ENCODE measurements at regions of chr12 and their contacts with region 1.

Region 1: DNA sequence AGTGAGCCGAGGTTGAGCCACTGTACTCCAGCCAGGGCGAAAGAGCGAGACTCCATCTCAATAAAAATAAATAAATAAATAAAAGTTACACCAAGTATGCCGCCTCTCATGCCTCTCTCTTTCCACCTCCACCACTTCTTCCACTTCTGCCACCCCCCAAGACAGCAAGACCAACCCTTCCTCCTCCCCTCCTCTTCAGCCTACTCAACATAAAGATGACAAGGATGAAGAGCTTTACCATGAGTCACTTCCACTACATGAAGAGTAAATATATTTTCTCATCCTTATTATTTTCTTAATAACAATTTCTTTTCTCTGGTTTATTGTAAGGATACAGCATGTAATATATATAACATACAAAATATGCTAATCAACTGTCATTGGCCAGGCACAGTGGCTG is 3.6 kb upstream of the TMED2 start:
- DNase-seq: no peak
- ATAC-seq: no peak
- H3K4me3 ChIP-seq: no peak overlapping the region
- H3K27ac ChIP-seq: peak overlapping the region in 2 of 4 donors; percentile 28 to 95
- H3K4me1 ChIP-seq: peaks cover 23 to 28% of the 10 kb centered on the region in 2 donors
- H3K27me3 ChIP-seq: no peaks in the 10 kb centered on the region
- CTCF ChIP-seq: no peak
- POLR2A ChIP-seq: no peak

Region 2: GRCh38 chr12:123388177-123388947 is 192.4 kb before region 1 on chr12:
- in situ Hi-C with region 1: no loop called
- intact Hi-C with region 1: loop called (anchors 2 kb)
- DNase-seq: peak; percentile 63 to 77
- ATAC-seq: peak; percentile 57 to 61
- H3K4me3 ChIP-seq: peak overlapping the region; percentile 63 to 74 (median 66)
- H3K27ac ChIP-seq: peak overlapping the region; percentile 86 to 96 (median 94)
- H3K4me1 ChIP-seq: peaks cover 46 to 51% of the 10 kb centered on the region in 2 donors
- H3K27me3 ChIP-seq: no peaks in the 10 kb centered on the region
- CTCF ChIP-seq: no peak
- POLR2A ChIP-seq: peak in 1 of 2 donors; percentile 8

Region 3: GRCh38 chr12:123436017-123436964 is 144.5 kb before region 1 on chr12 and contains the start of gene RILPL2:
- in situ Hi-C with region 1: no loop called
- intact Hi-C with region 1: loop called (anchors 2 kb)
- DNase-seq: peak; percentile 68 to 77
- ATAC-seq: peak; percentile 92 to 96
- H3K4me3 ChIP-seq: peak within 1 kb of the TSS; percentile 79 to 96 (median 94)
- H3K27ac ChIP-seq: peak within 1 kb of the TSS; percentile 66 to 75 (median 69)
- H3K4me1 ChIP-seq: peaks cover 10 to 14% of the 10 kb centered on the region in 2 donors
- H3K27me3 ChIP-seq: no peaks in the 10 kb centered on the region
- CTCF ChIP-seq: peak in 2 of 5 experiments; percentile 6 to 32
- POLR2A ChIP-seq: peak; percentile 43 to 44
- total RNA-seq, gene RILPL2: 1.2 to 2.0 (median 1.7) TPM

Region 4: GRCh38 chr12:123457980-123458783 is 122.6 kb before region 1 on chr12 and contains the start of gene SNRNP35:
- in situ Hi-C with region 1: loop called in 1 of 4 experiments (anchors 5 kb)
- intact Hi-C with region 1: loop called (anchors 1 kb)
- DNase-seq: peak; percentile 48 to 71
- ATAC-seq: peak; percentile 86
- H3K4me3 ChIP-seq: peak within 1 kb of the TSS; percentile 63 to 98 (median 89)
- H3K27ac ChIP-seq: peak within 1 kb of the TSS; percentile 86 to 99 (median 98)
- H3K4me1 ChIP-seq: peaks cover 8 to 12% of the 10 kb centered on the region in 2 donors
- H3K27me3 ChIP-seq: no peaks in the 10 kb centered on the region
- CTCF ChIP-seq: no peak
- POLR2A ChIP-seq: peak; percentile 51 to 55
- total RNA-seq, gene SNRNP35: 22.6 to 40.4 (median 23.5) TPM

Region 5: DNA sequence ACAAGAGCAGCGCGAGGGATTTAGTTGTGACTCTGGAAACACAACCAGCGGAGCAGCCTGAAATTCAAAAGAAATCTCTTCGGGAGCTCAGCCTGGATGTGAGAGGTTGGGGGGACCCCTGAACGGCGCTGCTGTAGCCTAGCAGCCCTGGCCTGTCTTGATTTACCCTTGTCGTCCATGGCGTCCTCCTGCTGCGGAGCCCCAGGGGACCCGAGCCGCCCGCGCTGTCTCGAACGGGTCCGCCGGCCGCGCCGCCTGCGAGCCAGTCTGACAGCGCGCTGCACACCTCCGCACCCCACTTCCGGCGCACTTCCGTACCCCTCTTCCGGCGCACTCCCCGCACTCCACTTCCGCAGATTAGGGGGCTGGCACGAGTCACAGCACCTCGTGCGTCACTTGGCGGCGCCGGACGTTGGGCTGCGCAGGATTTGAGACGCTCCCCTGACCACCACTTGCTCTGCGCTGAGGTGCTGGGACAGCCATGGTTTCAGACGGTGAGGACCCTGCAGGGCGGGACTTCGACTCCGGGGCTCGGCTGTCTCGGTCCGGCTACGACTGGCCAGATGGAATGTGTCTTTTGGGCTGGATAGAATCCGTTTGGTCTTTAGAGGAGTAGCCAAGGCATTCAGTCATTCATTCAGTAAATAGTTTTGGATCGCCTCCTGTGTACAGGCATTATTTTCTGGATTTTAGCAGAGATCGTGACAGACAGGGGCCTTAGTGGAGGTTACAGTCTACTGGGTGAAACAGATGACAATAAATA is 52.8 kb after region 1 on chr12 and contains the starts of genes EIF2B1 and GTF2H3:
- in situ Hi-C with region 1: no loop called
- intact Hi-C with region 1: loop called (anchors 1 kb)
- DNase-seq: peak; percentile 92 to 96
- ATAC-seq: peak; percentile 99
- H3K4me3 ChIP-seq: peak within 1 kb of the TSS; percentile 86 to 97 (median 95)
- H3K27ac ChIP-seq: peak within 1 kb of the TSS; percentile 74 to 89 (median 84)
- H3K4me1 ChIP-seq: peaks cover 12% of the 10 kb centered on the region in 2 donors
- H3K27me3 ChIP-seq: no peaks in the 10 kb centered on the region
- CTCF ChIP-seq: peak in 2 of 5 experiments; percentile 14 to 20
- POLR2A ChIP-seq: peak; percentile 63 to 85
- total RNA-seq, gene EIF2B1: 84.5 to 118 (median 112) TPM
- total RNA-seq, gene GTF2H3: 11.5 to 14.3 (median 12.3) TPM